ENCODE measurements at regions of chr4 and their contacts with region 1.

Region 1: GRCh38 chr4:1011022-1011694 is at the start of gene FGFRL1:
- DNase-seq: peak in 6 of 10 donors; percentile 33 to 69 (median 64)
- H3K4me3 ChIP-seq: peak within 1 kb of the TSS in 58 of 59 donors; percentile 2 to 70 (median 52)
- H3K27ac ChIP-seq: peak within 1 kb of the TSS in 18 of 59 donors; percentile 2 to 95 (median 41)
- H3K27me3 ChIP-seq: peaks cover 0 to 14% (median 0%) of the 10 kb centered on the region in 45 donors
- CTCF ChIP-seq: no peak
- total RNA-seq, gene FGFRL1: 18.7 to 109 (median 38.4) TPM

Region 2: GRCh38 chr4:1033840-1034551 is 22.8 kb after region 1 on chr4:
- intact Hi-C with region 1: loop called in 1 of 2 experiments (anchors 1 kb)
- DNase-seq: peak in 6 of 10 donors; percentile 23 to 72 (median 64)
- H3K4me3 ChIP-seq: peak overlapping the region in 28 of 59 donors; percentile 0 to 46 (median 18)
- H3K27ac ChIP-seq: peak overlapping the region in 12 of 59 donors; percentile 1 to 83 (median 46)
- H3K27me3 ChIP-seq: peaks cover 0 to 2% (median 0%) of the 10 kb centered on the region in 45 donors
- CTCF ChIP-seq: no peak

Region 3: DNA sequence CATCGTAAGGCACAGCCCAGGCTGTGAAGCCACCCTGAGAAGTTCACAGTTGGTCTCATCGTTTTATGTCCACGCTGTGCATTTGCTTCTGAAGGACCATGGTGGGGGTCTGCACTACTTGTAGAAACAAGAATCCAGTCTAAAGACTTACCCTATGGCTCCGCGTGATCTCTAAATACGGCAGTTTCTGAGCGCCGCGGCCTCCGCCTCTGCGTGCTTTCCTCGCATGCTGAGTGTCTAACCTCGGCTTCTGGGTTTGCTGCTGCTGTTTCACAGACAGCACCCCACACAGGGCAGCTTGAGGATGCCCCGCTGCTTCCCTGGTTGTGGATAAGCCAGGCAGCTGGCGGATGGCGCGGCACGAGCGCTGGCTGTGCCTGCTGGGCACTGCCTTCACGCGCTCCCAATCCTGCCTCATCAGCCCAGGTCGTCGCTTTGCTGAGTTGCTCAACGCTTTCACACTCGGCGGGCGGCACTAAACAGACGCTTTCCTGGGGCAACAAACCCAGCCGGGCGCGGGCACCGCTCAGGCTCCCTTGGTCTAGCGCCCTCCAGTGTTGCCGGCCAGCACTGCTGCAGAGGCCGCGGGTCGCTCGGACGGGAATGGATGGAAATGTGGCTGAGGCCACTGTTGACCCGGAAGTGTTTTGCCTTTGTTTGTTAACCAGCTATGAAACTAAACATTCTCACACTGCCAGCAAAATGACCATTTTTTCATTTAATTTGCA is 39.5 kb after region 1 on chr4:
- intact Hi-C with region 1: loop called (anchors 2 to 5 kb)
- DNase-seq: peak in 7 of 10 donors; percentile 53 to 81 (median 63)
- H3K4me3 ChIP-seq: peak overlapping the region in 15 of 59 donors; percentile 1 to 48 (median 30)
- H3K27ac ChIP-seq: peak overlapping the region in 17 of 59 donors; percentile 13 to 77 (median 46)
- H3K27me3 ChIP-seq: peaks cover 0 to 39% (median 11%) of the 10 kb centered on the region in 45 donors
- CTCF ChIP-seq: peak in 44 of 56 donors; percentile 25 to 91 (median 64)

Region 4: GRCh38 chr4:1192091-1192492 is 180.9 kb after region 1 on chr4:
- intact Hi-C with region 1: no loop called
- DNase-seq: peak; percentile 55 to 93 (median 88)
- H3K4me3 ChIP-seq: peak overlapping the region in 13 of 59 donors; percentile 3 to 43 (median 19)
- H3K27ac ChIP-seq: peak overlapping the region in 57 of 59 donors; percentile 7 to 91 (median 74)
- H3K27me3 ChIP-seq: no peaks in the 10 kb centered on the region
- CTCF ChIP-seq: peak in 15 of 56 donors; percentile 7 to 47 (median 25)

Measured in dorsolateral prefrontal cortex (tissue), 120 donors.